ENCODE measurements at regions of chr7 and their contacts with region 1.

Region 1: DNA sequence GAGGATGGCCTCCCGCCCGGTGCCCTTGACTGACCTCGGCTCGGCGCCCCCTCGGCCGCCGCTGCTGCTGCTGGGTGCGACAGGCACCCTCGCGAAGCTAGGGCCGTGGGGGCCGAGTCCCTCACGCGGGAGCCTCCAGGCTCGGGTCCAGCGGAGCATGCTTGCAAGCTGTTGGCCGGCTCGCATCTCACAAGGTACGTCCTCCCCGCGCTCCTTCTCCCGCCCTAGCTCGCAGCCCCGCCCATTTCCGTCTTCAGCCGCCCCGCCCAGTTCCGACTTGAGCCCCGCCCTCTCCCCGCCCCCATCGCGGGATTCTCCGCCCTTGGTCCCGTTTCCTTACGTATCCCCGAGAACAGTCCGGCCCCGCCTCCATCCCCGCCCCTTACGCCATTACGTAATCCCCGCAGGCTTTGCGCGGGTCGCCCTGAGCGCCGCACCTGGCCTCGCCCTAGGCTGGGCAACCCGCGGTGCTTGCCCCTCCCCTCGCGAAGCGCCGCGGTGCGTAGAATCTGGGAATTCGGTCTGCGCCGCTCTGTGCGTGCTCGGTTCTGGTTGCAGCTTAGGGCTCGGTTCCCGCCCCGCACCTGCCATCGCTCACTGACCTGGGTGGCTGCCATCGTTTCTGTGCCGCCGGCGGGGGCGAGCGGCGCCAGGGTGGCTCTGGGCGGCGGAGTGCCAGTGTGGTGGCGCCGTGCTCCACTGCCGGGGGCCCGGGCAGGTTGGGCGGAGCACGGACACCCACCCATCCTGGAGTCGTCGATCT is at the start of gene ABHD11:
- DNase-seq: peak; percentile 89 to 98
- ATAC-seq: peak; percentile 64 to 78
- H3K4me3 ChIP-seq: peak within 1 kb of the TSS; percentile 78
- H3K27ac ChIP-seq: peak within 1 kb of the TSS; percentile 88 to 96
- H3K4me1 ChIP-seq: peaks cover 24% of the 10 kb centered on the region
- CTCF ChIP-seq: no peak
- EP300 ChIP-seq: no peak
- POLR2A ChIP-seq: peak; percentile 78
- RAD21 ChIP-seq: peak in 1 of 2 experiments; percentile 41; a peak in 3 of 5 replicates
- polyA plus RNA-seq, gene ABHD11: 8.1 and 10.4 TPM in 2 replicates

Region 2: GRCh38 chr7:73606801-73607691 is 131.7 kb before region 1 on chr7:
- CTCF ChIA-PET with region 1: interaction called, 273 read pairs
- POLR2A ChIA-PET with region 1: no interaction called
- DNase-seq: peak; percentile 59 to 84
- ATAC-seq: peak; percentile 83 to 88
- H3K4me3 ChIP-seq: no peak overlapping the region
- H3K27ac ChIP-seq: peak overlapping the region; percentile 32 to 66; a peak in 5 of 6 replicates
- H3K4me1 ChIP-seq: peaks cover 18% of the 10 kb centered on the region
- CTCF ChIP-seq: peak; percentile 93
- EP300 ChIP-seq: no peak
- POLR2A ChIP-seq: no peak
- RAD21 ChIP-seq: peak; percentile 96 to 97

Region 3: GRCh38 chr7:73667344-73668102 is 71.3 kb before region 1 on chr7 and contains the start of gene VPS37D:
- CTCF ChIA-PET with region 1: interaction called, 11 read pairs
- POLR2A ChIA-PET with region 1: interaction called, 7 read pairs
- DNase-seq: peak; percentile 85 to 89
- ATAC-seq: peak; percentile 82 to 91
- H3K4me3 ChIP-seq: peak within 1 kb of the TSS; percentile 90
- H3K27ac ChIP-seq: peak within 1 kb of the TSS; percentile 95
- H3K4me1 ChIP-seq: peaks cover 18% of the 10 kb centered on the region; the same call in 2 of the 3 replicates
- CTCF ChIP-seq: peak; percentile 97
- EP300 ChIP-seq: no peak
- POLR2A ChIP-seq: no peak
- RAD21 ChIP-seq: peak; percentile 71 to 94
- polyA plus RNA-seq, gene VPS37D: 3.3 and 3.8 TPM in 2 replicates

Region 4: DNA sequence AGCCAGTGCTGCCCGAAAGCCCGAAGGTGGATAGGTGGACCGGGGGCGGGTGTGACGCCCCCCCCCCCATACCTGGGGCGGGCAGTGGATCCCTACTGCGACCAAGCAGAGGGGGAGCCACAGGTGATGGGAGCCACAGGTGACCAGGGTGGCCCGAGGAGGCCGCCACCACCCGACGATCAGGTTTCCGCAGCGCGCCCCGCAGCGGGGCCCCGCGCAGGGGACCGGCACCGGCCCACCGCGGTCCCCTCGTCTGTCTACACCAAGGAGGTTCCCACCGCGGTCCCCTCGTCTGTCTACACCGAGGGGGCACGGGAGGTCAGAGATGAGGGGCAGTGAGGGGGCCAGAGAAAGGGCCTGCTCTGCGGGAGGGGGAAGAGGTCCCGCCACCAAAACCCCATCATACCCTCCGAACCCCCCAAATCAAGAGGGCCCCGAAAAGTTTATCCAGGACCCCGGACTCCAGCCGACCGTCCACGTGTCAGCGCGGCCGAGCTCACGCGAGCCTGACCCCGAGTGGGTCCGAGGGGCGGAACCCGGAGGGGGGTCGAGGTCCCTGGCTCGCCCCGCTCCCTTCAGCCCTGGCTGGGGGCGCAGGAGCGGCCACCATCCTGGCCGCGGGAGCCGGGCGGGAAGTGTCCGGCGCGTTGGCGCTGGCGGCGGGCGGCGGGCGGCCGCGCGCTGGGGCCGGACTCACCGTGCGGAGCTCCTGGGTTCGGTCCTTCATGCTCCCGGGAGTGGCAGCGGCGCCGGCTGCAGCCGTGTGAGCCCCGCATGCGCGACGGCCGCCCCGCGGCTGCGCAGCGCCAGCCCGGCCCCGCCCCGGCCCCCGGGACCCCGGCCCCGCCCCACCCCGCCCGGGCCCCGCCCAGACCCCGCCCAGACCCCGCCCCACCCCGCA is 19.6 kb before region 1 on chr7 and contains the start of gene STX1A:
- CTCF ChIA-PET with region 1: interaction called, 62 read pairs
- POLR2A ChIA-PET with region 1: interaction called, 3 read pairs
- DNase-seq: peak in 1 of 2 experiments; percentile 66
- ATAC-seq: peak; percentile 17 to 32; a peak in 5 of 6 replicates
- H3K4me3 ChIP-seq: peak within 1 kb of the TSS; percentile 100
- H3K27ac ChIP-seq: peak within 1 kb of the TSS; percentile 99 to 100
- H3K4me1 ChIP-seq: peaks cover 65% of the 10 kb centered on the region
- CTCF ChIP-seq: no peak
- EP300 ChIP-seq: no peak
- POLR2A ChIP-seq: peak; percentile 63
- RAD21 ChIP-seq: no peak
- polyA plus RNA-seq, gene STX1A: 72.9 and 81.7 TPM in 2 replicates

Region 5: GRCh38 chr7:73842247-73842895 is 103.6 kb after region 1 on chr7 and contains the start of gene METTL27:
- CTCF ChIA-PET with region 1: interaction called, 3 read pairs
- POLR2A ChIA-PET with region 1: interaction called, 16 read pairs
- DNase-seq: peak; percentile 92 to 98
- ATAC-seq: peak; percentile 93 to 96
- H3K4me3 ChIP-seq: peak within 1 kb of the TSS; percentile 76
- H3K27ac ChIP-seq: peak within 1 kb of the TSS; percentile 87 to 92
- H3K4me1 ChIP-seq: peaks cover 8% of the 10 kb centered on the region; the same call in 1 of the 3 replicates
- CTCF ChIP-seq: no peak
- EP300 ChIP-seq: no peak
- POLR2A ChIP-seq: peak; percentile 67
- RAD21 ChIP-seq: no peak
- polyA plus RNA-seq, gene METTL27: 4.1 and 5.5 TPM in 2 replicates